CD4-positive, alpha-beta memory T cell (primary cell): ENCODE measurements at regions of chr12 and their contacts with region 1.

Region 1: GRCh38 chr12:53220801-53221202 is 11.2 kb downstream of the RARG start:
- DNase-seq: peak; percentile 60 to 85 (median 65)
- H3K4me3 ChIP-seq: peak overlapping the region; percentile 73 to 82
- H3K4me3 Mint-ChIP-seq: peak overlapping the region; percentile 95 to 99 (median 98)
- H3K27ac ChIP-seq: peak overlapping the region; percentile 98
- H3K27ac Mint-ChIP-seq: peak overlapping the region; percentile 93 to 99 (median 97)
- H3K4me1 ChIP-seq: peaks cover 78% of the 10 kb centered on the region
- H3K4me1 Mint-ChIP-seq: peaks cover 63 to 93% (median 72%) of the 10 kb centered on the region in 4 donors
- H3K27me3 ChIP-seq: no peaks in the 10 kb centered on the region
- H3K27me3 Mint-ChIP-seq: no peaks in the 10 kb centered on the region

Region 2: GRCh38 chr12:52327052-52327829 is 893.6 kb before region 1 on chr12:
- CTCF ChIA-PET with region 1: no interaction called
- POLR2A ChIA-PET with region 1: no interaction called
- intact Hi-C with region 1: no loop called
- DNase-seq: peak; percentile 76 to 84 (median 80)
- H3K4me3 ChIP-seq: no peak overlapping the region
- H3K4me3 Mint-ChIP-seq: peak overlapping the region in 1 of 8 donors; percentile 2
- H3K27ac ChIP-seq: no peak overlapping the region
- H3K27ac Mint-ChIP-seq: peak overlapping the region in 2 of 7 donors; percentile 36 to 75
- H3K4me1 ChIP-seq: peaks cover 3% of the 10 kb centered on the region
- H3K4me1 Mint-ChIP-seq: peaks cover 5 to 7% (median 6%) of the 10 kb centered on the region in 4 donors
- H3K27me3 ChIP-seq: no peaks in the 10 kb centered on the region
- H3K27me3 Mint-ChIP-seq: peaks cover 7 to 12% of the 10 kb centered on the region in 2 donors

Region 3: DNA sequence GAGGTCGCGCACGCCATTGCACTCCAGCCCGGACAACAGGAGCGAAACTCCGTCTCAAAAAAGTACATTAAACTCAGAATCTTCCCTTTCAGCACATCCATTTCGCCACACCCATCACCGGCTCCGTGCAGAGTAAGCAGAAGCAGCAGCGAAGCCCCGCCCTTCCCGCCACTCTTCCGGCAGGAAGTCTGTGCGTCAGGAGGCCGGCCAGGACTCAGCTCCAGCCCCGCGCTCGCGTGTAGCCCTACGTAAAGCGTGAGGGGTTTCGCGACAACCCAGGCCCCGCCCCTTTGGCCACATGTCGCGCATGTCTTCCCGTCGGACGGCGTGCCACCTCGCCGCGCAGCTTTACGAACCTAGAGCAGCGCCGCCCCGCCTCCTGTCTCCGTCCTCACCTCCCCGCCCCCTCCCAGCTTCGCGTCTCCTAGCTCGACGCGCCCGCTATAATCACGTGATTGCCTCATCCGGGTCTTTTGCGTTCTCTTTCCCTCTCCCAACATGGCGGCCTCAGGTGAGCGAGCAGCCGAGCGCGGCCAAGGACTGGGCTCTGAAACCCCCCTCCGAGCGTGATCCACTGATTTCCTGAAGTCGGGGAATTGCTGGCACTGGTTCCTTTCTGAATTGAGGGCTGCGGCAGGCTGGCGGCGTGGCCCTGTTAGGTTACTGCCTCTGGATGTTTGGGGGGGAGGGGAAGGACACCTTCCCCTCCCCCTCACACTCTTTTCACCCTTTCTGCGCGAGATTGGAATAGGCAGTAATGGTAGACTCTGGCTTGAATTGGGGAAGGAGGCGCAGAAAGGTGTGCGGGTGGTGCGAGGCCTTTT is 214.6 kb before region 1 on chr12 and contains the start of gene EIF4B:
- CTCF ChIA-PET with region 1: no interaction called
- POLR2A ChIA-PET with region 1: no interaction called
- intact Hi-C with region 1: loop called (anchors 2 kb)
- DNase-seq: peak; percentile 97 to 100 (median 100)
- H3K4me3 ChIP-seq: peak within 1 kb of the TSS; percentile 99 to 100
- H3K4me3 Mint-ChIP-seq: peak within 1 kb of the TSS; percentile 99 to 100 (median 99)
- H3K27ac ChIP-seq: peak within 1 kb of the TSS; percentile 94
- H3K27ac Mint-ChIP-seq: peak within 1 kb of the TSS; percentile 99 to 100 (median 99)
- H3K4me1 ChIP-seq: peaks cover 51% of the 10 kb centered on the region
- H3K4me1 Mint-ChIP-seq: peaks cover 26 to 58% (median 43%) of the 10 kb centered on the region in 4 donors
- H3K27me3 ChIP-seq: no peaks in the 10 kb centered on the region
- H3K27me3 Mint-ChIP-seq: no peaks in the 10 kb centered on the region
- total RNA-seq, gene EIF4B: 730 to 777 TPM

Region 4: GRCh38 chr12:53205747-53206419 is 14.9 kb before region 1 on chr12:
- CTCF ChIA-PET with region 1: interaction called, 16 read pairs
- POLR2A ChIA-PET with region 1: interaction called, 175 read pairs
- intact Hi-C with region 1: no loop called
- DNase-seq: peak in 4 of 5 donors; percentile 32 to 80 (median 41)
- H3K4me3 ChIP-seq: peak overlapping the region; percentile 85 to 88
- H3K4me3 Mint-ChIP-seq: peak overlapping the region; percentile 81 to 98 (median 88)
- H3K27ac ChIP-seq: peak overlapping the region; percentile 79
- H3K27ac Mint-ChIP-seq: peak overlapping the region; percentile 76 to 96 (median 91)
- H3K4me1 ChIP-seq: peaks cover 99% of the 10 kb centered on the region
- H3K4me1 Mint-ChIP-seq: peaks cover 40 to 84% (median 64%) of the 10 kb centered on the region in 4 donors
- H3K27me3 ChIP-seq: no peaks in the 10 kb centered on the region
- H3K27me3 Mint-ChIP-seq: no peaks in the 10 kb centered on the region

Region 5: DNA sequence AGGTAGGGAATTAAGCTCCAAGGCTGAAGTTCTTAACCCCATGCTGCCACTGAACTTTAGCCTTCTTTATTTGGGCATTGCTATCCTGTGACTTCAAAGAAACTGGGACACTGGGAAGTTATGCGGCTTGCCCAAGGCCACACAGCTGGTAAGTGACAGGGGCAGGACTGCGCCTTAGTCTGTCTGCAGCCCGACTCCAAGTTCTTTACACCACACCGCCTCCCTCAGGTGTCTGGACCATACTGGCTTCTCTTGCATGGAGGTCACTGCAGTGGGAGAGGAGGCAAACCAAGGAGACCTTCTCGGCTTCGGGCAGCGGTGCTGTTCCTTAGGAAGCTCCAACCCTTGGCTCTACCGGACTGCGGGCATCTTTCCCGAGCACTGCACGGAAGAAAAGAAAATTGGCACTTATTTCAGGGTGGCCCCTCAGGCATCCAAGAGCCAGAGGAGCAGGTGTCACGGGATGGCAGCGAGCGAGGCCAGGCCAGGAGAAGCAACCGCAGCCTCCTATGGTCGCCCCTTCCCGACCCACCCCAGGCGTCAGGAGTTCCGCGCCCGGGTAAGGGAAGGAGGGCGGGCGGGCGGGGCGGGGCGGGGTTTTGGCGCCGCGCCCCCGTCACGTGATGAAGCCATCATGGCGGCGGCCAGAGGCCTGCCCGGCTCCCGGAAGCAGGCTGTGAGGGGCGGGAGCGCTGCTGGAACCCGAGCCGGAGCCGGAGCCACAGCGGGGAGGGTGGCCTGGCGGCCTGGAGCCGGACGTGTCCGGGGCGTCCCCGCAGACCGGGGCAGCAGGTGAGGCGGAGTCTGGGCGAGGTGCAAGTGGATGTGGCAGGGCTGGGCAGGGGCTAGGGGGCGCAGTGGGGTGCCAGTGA is 30.9 kb after region 1 on chr12:
- CTCF ChIA-PET with region 1: interaction called, 160 read pairs
- POLR2A ChIA-PET with region 1: interaction called, 207 read pairs
- intact Hi-C with region 1: loop called (anchors 1 kb)
- DNase-seq: peak; percentile 67 to 78 (median 71)
- H3K4me3 ChIP-seq: peak overlapping the region; percentile 73 to 92
- H3K4me3 Mint-ChIP-seq: peak overlapping the region; percentile 96 to 100 (median 98)
- H3K27ac ChIP-seq: peak overlapping the region; percentile 83
- H3K27ac Mint-ChIP-seq: peak overlapping the region; percentile 96 to 99 (median 98)
- H3K4me1 ChIP-seq: peaks cover 46% of the 10 kb centered on the region
- H3K4me1 Mint-ChIP-seq: peaks cover 23 to 52% (median 41%) of the 10 kb centered on the region in 4 donors
- H3K27me3 ChIP-seq: no peaks in the 10 kb centered on the region
- H3K27me3 Mint-ChIP-seq: no peaks in the 10 kb centered on the region

Region 6: DNA sequence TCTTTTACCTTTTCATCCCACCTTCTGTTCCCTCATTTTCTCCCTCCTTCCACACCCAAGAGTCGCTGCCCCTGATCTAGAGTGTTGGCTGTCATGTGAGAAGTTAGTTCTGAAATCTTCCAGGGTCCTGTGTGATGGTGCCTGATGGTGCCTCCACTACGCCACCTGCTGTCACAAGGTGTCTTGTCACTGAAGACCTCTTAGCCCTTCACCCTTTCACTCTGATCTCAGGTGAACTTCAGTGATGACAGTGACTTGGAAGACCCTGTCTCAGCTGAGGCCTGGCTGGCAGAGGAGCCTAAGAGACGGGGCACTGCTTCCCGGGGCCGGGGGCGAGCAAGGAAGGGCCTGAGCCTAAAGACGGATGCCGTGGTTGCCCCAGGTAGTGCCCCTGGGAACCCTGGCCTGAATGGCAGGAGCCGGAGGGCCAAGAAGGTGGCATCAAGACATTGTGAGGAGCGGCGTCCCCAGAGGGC is 67.0 kb after region 1 on chr12:
- CTCF ChIA-PET with region 1: interaction called, 339 read pairs
- POLR2A ChIA-PET with region 1: interaction called, 50 read pairs
- intact Hi-C with region 1: no loop called
- DNase-seq: peak; percentile 68 to 73 (median 72)
- H3K4me3 ChIP-seq: no peak overlapping the region
- H3K4me3 Mint-ChIP-seq: peak overlapping the region in 1 of 8 donors; percentile 32
- H3K27ac ChIP-seq: no peak overlapping the region
- H3K27ac Mint-ChIP-seq: peak overlapping the region in 4 of 7 donors; percentile 3 to 71 (median 34)
- H3K4me1 ChIP-seq: no peaks in the 10 kb centered on the region
- H3K4me1 Mint-ChIP-seq: peaks cover 4 to 7% (median 5%) of the 10 kb centered on the region in 4 donors
- H3K27me3 ChIP-seq: no peaks in the 10 kb centered on the region
- H3K27me3 Mint-ChIP-seq: no peaks in the 10 kb centered on the region